ENCODE measurements at regions of chr21 and their contacts with region 1.

Region 1: GRCh38 chr21:29175408-29176134 is 45.1 kb downstream of the MAP3K7CL start:
- DNase-seq: no peak
- ATAC-seq: no peak
- H3K4me3 ChIP-seq: no peak overlapping the region
- H3K27ac ChIP-seq: no peak overlapping the region
- H3K4me1 ChIP-seq: peaks cover 8% of the 10 kb centered on the region
- H3K27me3 ChIP-seq: no peaks in the 10 kb centered on the region
- CTCF ChIP-seq: no peak
- EP300 ChIP-seq: no peak
- POLR2A ChIP-seq: no peak
- RAD21 ChIP-seq: no peak

Region 2: DNA sequence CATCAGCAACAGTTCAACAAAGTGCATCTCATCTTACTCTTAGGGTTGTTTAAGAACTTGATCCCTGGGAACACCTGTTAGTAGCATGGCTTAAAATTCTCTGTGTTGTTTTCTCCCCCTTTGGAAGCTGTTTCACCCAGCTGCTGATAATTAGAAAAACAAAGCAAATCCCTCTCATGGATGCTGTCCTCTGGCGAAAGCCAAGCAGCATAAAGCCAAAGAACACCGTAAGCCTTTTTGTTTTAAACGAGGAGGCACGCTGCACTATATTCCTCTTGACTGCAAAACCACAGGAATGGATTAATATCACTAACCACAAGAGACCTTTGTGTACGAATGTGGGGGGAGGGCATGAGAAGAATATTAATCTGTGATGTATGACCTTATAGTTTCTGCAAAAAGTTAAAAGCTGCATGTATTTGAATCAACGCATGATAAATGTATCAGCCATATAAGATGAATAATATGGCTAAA is 1106.1 kb before region 1 on chr21:
- CTCF ChIA-PET with region 1: no interaction called
- POLR2A ChIA-PET with region 1: no interaction called
- RAD21 ChIA-PET with region 1: no interaction called
- SMC1A ChIA-PET with region 1: no interaction called
- in situ Hi-C with region 1: no loop called
- intact Hi-C with region 1: no loop called
- DNase-seq: no peak
- ATAC-seq: no peak
- H3K4me3 ChIP-seq: no peak overlapping the region
- H3K27ac ChIP-seq: no peak overlapping the region
- H3K4me1 ChIP-seq: no peaks in the 10 kb centered on the region
- H3K27me3 ChIP-seq: no peaks in the 10 kb centered on the region
- CTCF ChIP-seq: no peak
- EP300 ChIP-seq: no peak
- POLR2A ChIP-seq: no peak
- RAD21 ChIP-seq: no peak

Region 3: DNA sequence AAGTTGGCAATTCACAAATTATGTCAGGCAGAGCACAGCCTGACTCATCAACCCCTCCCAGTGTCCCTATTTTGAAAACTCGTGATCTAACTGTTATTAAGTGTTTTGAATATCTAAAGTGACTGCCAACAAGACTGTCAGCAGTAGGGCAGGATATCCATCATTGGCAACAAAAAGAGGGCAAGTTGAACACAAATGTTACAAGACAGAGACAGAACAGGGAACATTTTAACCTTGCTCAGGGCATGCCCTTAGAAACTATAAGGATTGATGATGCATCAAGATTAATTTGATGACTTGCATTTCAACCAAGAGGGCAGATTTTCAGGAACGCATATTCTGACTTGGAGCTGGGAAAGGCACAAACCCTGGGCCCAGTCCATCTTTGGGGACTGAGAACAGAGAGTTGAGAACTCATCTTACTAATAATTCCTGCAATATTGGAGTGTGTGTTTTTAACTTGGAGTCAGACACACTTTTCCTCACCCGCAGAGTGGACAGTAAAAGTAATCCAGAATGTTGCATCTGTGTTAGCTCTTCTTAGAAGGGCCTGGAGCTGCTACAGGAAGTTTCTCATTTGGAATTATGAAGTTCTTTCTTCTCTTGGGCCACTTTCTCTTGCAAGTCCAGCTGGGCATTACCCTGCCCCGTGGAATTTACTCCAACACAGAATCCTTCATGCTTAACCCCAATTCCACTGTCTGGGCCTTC is 500.1 kb before region 1 on chr21:
- CTCF ChIA-PET with region 1: no interaction called
- POLR2A ChIA-PET with region 1: no interaction called
- RAD21 ChIA-PET with region 1: no interaction called
- SMC1A ChIA-PET with region 1: no interaction called
- in situ Hi-C with region 1: no loop called
- intact Hi-C with region 1: no loop called
- DNase-seq: no peak
- ATAC-seq: no peak
- H3K4me3 ChIP-seq: no peak overlapping the region; the same call in 1 of the 2 replicates
- H3K27ac ChIP-seq: no peak overlapping the region
- H3K4me1 ChIP-seq: no peaks in the 10 kb centered on the region
- H3K27me3 ChIP-seq: no peaks in the 10 kb centered on the region
- CTCF ChIP-seq: no peak
- EP300 ChIP-seq: no peak
- POLR2A ChIP-seq: no peak
- RAD21 ChIP-seq: no peak

Region 4: DNA sequence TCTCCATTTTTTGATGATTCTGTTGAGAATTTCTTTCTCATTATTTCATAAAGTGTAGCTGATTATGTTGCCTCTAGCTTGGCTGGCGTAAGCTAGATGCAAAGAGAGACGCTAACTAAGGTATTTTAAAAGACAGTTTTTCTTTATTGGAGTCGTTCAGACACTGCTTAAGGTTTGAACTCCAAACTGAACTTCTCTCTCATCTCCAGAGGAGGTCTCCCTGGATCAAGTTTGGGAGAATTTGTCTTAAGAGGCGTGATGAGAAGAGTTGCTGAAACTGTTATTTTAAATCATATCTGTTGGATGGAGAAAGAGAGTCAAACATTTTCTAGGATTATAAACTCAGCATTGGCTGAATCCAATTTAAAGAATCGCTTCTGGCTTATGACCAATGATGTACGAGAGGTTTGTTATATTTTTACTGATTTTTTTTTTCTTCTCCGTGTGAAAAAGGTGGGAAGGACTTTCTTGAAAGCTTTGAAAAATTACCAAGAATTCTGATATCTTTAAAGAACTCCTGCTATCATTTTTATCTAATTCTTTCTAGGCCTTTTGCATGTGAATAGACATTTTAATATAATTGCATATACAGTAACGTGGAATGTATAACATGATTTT is 11.1 kb before region 1 on chr21:
- CTCF ChIA-PET with region 1: interaction called, 10 read pairs
- POLR2A ChIA-PET with region 1: interaction called, 3 read pairs
- RAD21 ChIA-PET with region 1: interaction called, 4 read pairs
- SMC1A ChIA-PET with region 1: interaction called, 9 read pairs
- in situ Hi-C with region 1: no loop called
- intact Hi-C with region 1: no loop called
- DNase-seq: no peak
- ATAC-seq: peak; percentile 78
- H3K4me3 ChIP-seq: no peak overlapping the region
- H3K27ac ChIP-seq: no peak overlapping the region
- H3K4me1 ChIP-seq: no peaks in the 10 kb centered on the region
- H3K27me3 ChIP-seq: no peaks in the 10 kb centered on the region
- CTCF ChIP-seq: peak; percentile 36 to 55 (median 50); a peak in 5 of 6 replicates
- EP300 ChIP-seq: no peak
- POLR2A ChIP-seq: no peak
- RAD21 ChIP-seq: peak; percentile 97